RWPE1 (cell line): ENCODE measurements at regions of chr2 and their contacts with region 1.

Region 1: DNA sequence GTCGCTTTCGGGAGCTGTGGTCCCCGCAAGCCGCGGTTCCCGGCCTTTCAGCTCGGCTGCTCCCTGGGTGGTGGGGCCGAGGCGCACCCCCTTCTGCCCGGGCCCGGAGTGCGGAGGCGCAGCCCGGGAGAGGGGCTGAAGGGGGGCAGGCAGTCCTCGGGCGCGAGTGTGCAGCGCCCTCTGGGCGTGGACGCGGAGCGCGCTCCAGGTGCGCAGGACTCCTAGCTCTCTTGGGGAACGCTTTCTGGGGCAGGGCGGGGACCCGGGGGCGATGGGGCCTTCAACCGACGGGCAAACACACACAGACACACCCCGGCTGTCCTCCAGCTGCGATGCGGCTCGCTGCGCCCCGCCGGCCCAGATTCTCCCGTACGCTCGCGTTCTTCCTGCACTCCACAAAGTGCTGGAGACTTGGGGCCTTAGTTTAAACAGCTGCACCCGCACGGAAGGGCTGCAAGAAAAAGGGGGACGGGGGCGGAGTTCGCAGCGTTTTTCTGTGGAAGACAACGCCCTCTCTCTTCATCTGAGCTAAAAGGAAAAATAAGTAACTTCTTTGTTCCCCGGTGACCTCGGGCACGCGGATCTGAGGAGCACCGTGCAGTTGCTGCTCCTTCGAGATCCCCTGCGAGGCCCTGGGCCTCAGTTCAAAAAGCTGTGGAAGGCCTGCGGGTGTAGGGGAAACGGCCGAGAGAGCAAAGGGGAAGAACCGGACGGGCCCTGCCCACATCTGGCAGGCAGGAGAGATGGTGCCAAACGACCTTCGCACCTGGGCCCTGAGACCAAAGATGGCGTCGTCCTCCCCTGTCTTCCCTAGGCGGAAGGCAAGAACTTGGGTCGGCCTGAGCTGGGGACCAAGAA is 593 bp upstream of the SDC1 start:
- DNase-seq: no peak
- H3K27ac ChIP-seq: peak overlapping the region; percentile 100
- CTCF ChIP-seq: peak; percentile 79

Region 2: DNA sequence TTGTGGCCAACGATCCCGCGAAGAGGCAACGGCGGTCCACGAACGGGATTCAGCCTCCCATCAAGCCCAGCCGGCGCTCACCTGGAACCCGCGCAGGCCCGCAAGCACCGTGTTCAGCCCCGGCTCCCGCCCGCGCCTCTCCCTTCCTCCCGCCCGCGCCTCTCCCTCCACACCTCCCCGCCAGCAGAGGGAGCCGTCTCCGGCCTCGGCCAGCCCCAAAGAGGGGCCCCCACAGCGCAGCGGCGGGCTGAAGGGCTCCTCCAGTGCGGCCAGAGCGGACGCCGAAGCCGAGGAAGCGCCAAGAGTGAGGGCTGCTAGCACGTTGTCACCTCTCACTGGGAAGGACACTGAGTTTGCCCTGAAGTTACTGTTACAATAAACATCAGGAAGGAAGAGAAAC is 118.8 kb before region 1 on chr2:
- CTCF ChIA-PET with region 1: interaction called, 15 read pairs
- POLR2A ChIA-PET with region 1: interaction called, 5 read pairs
- DNase-seq: peak; percentile 40
- H3K27ac ChIP-seq: peak overlapping the region; percentile 64
- CTCF ChIP-seq: peak; percentile 86

Region 3: DNA sequence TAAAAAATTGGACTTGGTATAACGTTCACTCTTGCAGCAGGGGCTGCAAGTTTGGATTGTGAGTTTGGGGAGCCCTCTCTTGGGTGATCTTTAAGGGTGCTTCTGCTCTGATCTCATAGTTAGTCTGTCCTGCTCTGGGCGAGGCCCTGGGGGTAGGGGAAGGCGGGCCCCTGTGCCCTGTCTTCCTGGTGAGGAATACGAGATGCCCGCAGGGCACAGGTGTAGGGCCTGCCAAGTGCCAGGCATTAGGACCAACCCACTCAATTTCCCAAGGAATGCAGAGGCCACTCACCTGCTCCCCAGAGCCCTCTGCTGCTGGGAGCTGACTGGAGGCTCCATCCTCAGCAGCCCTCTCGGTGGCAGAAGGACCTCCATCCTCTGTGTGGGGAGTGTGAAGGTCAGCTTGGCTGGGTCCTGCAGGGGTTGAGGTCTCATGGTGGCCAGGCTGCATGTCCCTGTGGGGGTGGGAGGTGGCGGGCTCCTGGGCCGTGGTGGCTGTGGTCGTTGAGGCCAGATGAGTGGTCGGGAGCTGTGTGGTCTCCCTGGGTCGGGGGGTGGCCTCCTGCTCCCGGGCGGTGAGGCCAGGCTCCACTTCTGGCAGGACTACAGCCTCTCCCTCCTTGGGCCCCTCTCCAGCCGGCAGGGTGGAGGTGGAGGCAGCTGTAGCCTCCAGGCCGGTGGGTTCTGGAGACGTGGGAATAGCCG is 21.9 kb before region 1 on chr2:
- CTCF ChIA-PET with region 1: interaction called, 10 read pairs
- POLR2A ChIA-PET with region 1: interaction called, 6 read pairs
- DNase-seq: no peak
- H3K27ac ChIP-seq: peak overlapping the region; percentile 100
- CTCF ChIP-seq: no peak

Region 4: DNA sequence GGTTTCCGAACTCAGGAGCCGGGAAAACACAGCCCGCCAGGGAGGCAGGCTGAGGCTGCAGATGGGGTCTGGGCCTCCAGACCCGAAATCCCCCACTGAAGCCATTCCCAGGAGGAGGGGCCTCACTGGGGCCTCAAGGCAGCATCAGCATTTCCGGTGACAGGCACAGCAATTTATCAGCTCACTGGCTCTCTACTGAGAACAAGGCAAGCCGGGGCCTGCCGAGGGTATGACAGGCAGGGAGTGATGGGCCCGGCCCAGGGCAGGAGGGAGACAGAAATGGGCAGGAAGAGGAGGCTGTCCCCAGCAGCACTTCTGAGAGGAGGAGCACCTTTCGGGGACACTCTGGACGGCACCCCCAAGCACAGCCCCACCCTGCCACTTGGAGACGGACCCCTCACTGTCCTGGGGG is 13.1 kb before region 1 on chr2:
- CTCF ChIA-PET with region 1: interaction called, 13 read pairs
- POLR2A ChIA-PET with region 1: interaction called, 10 read pairs
- DNase-seq: peak; percentile 94
- H3K27ac ChIP-seq: peak overlapping the region; percentile 100
- CTCF ChIP-seq: no peak